ENCODE measurements at regions of chr1 and their contacts with region 1.

Region 1: DNA sequence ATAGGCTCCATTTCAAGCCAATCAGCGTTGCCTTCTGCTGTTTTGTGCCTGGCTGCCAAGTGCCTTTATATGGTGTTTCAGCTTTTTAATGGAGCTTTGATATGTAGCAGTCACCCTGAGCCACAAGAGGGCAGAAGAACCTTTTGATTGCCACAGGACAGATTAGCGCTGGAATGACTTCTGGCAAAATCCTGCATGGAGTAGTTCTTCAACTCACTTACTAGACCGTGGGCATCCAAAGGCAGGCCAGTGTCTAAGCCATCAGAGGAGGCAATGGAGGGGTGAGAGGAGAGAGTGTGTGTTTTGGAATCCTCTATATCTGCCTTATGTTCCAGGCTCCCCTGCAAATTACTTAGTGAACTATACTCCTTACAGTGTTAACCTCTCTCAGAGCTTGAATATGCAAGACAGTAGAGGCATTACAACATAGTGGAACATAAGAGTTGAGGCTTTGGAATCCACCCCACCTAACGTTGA is 56.2 kb downstream of the ST3GAL3 start:
- DNase-seq: peak; percentile 75
- H3K4me3 ChIP-seq: no peak overlapping the region
- H3K27ac ChIP-seq: no peak overlapping the region
- H3K4me1 ChIP-seq: peaks cover 5% of the 10 kb centered on the region
- CTCF ChIP-seq: peak; percentile 99

Region 2: DNA sequence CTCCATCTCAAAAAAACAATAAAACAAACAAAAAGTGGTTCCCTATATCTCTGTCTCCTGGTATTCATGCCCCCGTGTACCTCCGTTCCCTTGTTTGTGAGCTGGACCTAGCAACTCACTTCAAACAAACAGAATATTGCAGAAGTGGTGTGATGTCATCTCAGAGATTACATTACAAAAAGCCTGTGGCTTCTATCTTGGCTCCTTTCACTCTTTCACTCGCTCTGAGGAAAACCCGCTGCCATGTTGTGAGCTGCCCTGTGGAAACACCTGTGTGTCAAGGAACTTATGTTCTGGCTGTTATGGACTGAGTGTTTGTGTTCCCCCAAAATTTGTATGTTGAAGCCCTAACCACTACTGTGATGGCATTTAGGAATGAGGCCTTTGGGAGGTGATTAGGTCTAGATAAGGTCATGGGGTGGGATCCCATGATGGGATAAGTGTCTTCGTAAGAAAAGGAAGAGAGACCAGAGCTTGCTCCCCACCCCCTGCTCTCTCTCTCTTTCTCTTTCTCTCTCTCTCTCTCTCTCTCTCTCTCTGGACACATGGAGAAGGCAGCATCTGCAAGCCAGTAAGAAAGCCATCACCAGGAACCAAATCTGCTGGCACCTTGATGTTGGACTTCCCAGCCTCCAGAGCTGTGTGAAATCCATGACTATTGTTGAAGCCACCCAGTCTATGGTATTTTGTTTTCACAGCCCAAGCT is 302.4 kb before region 1 on chr1:
- CTCF ChIA-PET with region 1: no interaction called
- POLR2A ChIA-PET with region 1: no interaction called
- intact Hi-C with region 1: no loop called
- DNase-seq: no peak
- H3K4me3 ChIP-seq: no peak overlapping the region
- H3K27ac ChIP-seq: no peak overlapping the region
- H3K4me1 ChIP-seq: no peaks in the 10 kb centered on the region
- CTCF ChIP-seq: no peak

Region 3: GRCh38 chr1:43529206-43529731 is 234.3 kb before region 1 on chr1:
- CTCF ChIA-PET with region 1: no interaction called
- POLR2A ChIA-PET with region 1: no interaction called
- intact Hi-C with region 1: loop called (anchors 5 kb)
- DNase-seq: peak; percentile 79
- H3K4me3 ChIP-seq: no peak overlapping the region
- H3K27ac ChIP-seq: no peak overlapping the region
- H3K4me1 ChIP-seq: peaks cover 3% of the 10 kb centered on the region
- CTCF ChIP-seq: peak; percentile 98

Region 4: GRCh38 chr1:43836267-43836951 is 72.9 kb after region 1 on chr1:
- CTCF ChIA-PET with region 1: no interaction called
- POLR2A ChIA-PET with region 1: no interaction called
- intact Hi-C with region 1: loop called (anchors 5 kb)
- DNase-seq: peak; percentile 94
- H3K4me3 ChIP-seq: peak overlapping the region; percentile 48
- H3K27ac ChIP-seq: peak overlapping the region; percentile 93
- H3K4me1 ChIP-seq: peaks cover 63% of the 10 kb centered on the region
- CTCF ChIP-seq: no peak

Region 5: GRCh38 chr1:44036409-44037139 is 273.0 kb after region 1 on chr1:
- CTCF ChIA-PET with region 1: interaction called, 5 read pairs
- POLR2A ChIA-PET with region 1: no interaction called
- intact Hi-C with region 1: loop called (anchors 5 kb)
- DNase-seq: peak; percentile 74
- H3K4me3 ChIP-seq: no peak overlapping the region
- H3K27ac ChIP-seq: no peak overlapping the region
- H3K4me1 ChIP-seq: peaks cover 13% of the 10 kb centered on the region
- CTCF ChIP-seq: peak; percentile 91

Measured in OCI-LY7 (cell line).